ENCODE measurements at regions of chr16 and their contacts with region 1.

Region 1: GRCh38 chr16:2520092-2520783 is at the start of gene AMDHD2:
- DNase-seq: peak; percentile 95
- ATAC-seq: peak; percentile 77
- H3K4me3 Mint-ChIP-seq: peak within 1 kb of the TSS; percentile 80
- H3K27ac Mint-ChIP-seq: peak within 1 kb of the TSS; percentile 89
- H3K4me1 Mint-ChIP-seq: peaks cover 52% of the 10 kb centered on the region
- H3K27me3 Mint-ChIP-seq: no peaks in the 10 kb centered on the region
- total RNA-seq, gene AMDHD2: 20.9 to 31.6 TPM

Region 2: GRCh38 chr16:2260250-2260649 is 260.0 kb before region 1 on chr16:
- CTCF ChIA-PET with region 1: no interaction called
- POLR2A ChIA-PET with region 1: no interaction called
- intact Hi-C with region 1: no loop called
- DNase-seq: no peak
- ATAC-seq: no peak
- H3K4me3 Mint-ChIP-seq: no peak overlapping the region
- H3K27ac Mint-ChIP-seq: no peak overlapping the region
- H3K4me1 Mint-ChIP-seq: peaks cover 11% of the 10 kb centered on the region
- H3K27me3 Mint-ChIP-seq: no peaks in the 10 kb centered on the region

Region 3: GRCh38 chr16:2531767-2532493 is 11.7 kb after region 1 on chr16:
- CTCF ChIA-PET with region 1: interaction called, 3 read pairs
- POLR2A ChIA-PET with region 1: interaction called, 8 read pairs
- intact Hi-C with region 1: loop called (anchors 1 kb)
- DNase-seq: peak; percentile 99
- ATAC-seq: peak; percentile 94
- H3K4me3 Mint-ChIP-seq: peak overlapping the region; percentile 82
- H3K27ac Mint-ChIP-seq: peak overlapping the region; percentile 97
- H3K4me1 Mint-ChIP-seq: peaks cover 17% of the 10 kb centered on the region
- H3K27me3 Mint-ChIP-seq: no peaks in the 10 kb centered on the region